Activated CD4-positive, alpha-beta memory T cell treated with anti-CD3 and anti-CD28 coated beads for 36 hours (primary cell): ENCODE measurements at regions of chr6 and their contacts with region 1.

Region 1: GRCh38 chr6:42075159-42075838 is 25.0 kb downstream of the TAF8 start:
- DNase-seq: peak; percentile 84
- H3K4me3 Mint-ChIP-seq: no peak overlapping the region
- H3K27ac Mint-ChIP-seq: no peak overlapping the region
- H3K4me1 Mint-ChIP-seq: peaks cover 14% of the 10 kb centered on the region
- H3K27me3 Mint-ChIP-seq: no peaks in the 10 kb centered on the region

Region 2: GRCh38 chr6:42166444-42167141 is 91.3 kb after region 1 on chr6:
- CTCF ChIA-PET with region 1: interaction called, 23 read pairs
- POLR2A ChIA-PET with region 1: no interaction called
- intact Hi-C with region 1: loop called (anchors 1 kb)
- DNase-seq: peak; percentile 87
- H3K4me3 Mint-ChIP-seq: no peak overlapping the region
- H3K27ac Mint-ChIP-seq: no peak overlapping the region
- H3K4me1 Mint-ChIP-seq: no peaks in the 10 kb centered on the region
- H3K27me3 Mint-ChIP-seq: no peaks in the 10 kb centered on the region